ENCODE measurements at regions of chr7 and their contacts with region 1.

Region 1: GRCh38 chr7:34373940-34374339 is 284.1 kb upstream of the NPSR1 start:
- DNase-seq: no peak
- H3K4me3 ChIP-seq: no peak overlapping the region
- H3K27ac ChIP-seq: no peak overlapping the region
- H3K4me1 ChIP-seq: no peaks in the 10 kb centered on the region
- H3K27me3 ChIP-seq: no peaks in the 10 kb centered on the region
- CTCF ChIP-seq: no peak
- POLR2A ChIP-seq: no peak

Region 2: GRCh38 chr7:36161981-36162380 is 1788.0 kb after region 1 on chr7:
- intact Hi-C with region 1: loop called (anchors 10 kb)
- DNase-seq: no peak
- H3K4me3 ChIP-seq: no peak overlapping the region
- H3K27ac ChIP-seq: no peak overlapping the region
- H3K4me1 ChIP-seq: no peaks in the 10 kb centered on the region
- H3K27me3 ChIP-seq: no peaks in the 10 kb centered on the region
- CTCF ChIP-seq: no peak
- POLR2A ChIP-seq: no peak